Activated naive CD4-positive, alpha-beta T cell treated with anti-CD3 and anti-CD28 coated beads for 36 hours (primary cell): ENCODE measurements at regions of chr2 and their contacts with region 1.

Region 1: GRCh38 chr2:64914735-64915509 is 74.3 kb upstream of the SLC1A4 start:
- DNase-seq: no peak
- H3K4me3 Mint-ChIP-seq: no peak overlapping the region
- H3K27ac Mint-ChIP-seq: no peak overlapping the region
- H3K4me1 Mint-ChIP-seq: peaks cover 14% of the 10 kb centered on the region
- H3K27me3 Mint-ChIP-seq: no peaks in the 10 kb centered on the region

Region 2: DNA sequence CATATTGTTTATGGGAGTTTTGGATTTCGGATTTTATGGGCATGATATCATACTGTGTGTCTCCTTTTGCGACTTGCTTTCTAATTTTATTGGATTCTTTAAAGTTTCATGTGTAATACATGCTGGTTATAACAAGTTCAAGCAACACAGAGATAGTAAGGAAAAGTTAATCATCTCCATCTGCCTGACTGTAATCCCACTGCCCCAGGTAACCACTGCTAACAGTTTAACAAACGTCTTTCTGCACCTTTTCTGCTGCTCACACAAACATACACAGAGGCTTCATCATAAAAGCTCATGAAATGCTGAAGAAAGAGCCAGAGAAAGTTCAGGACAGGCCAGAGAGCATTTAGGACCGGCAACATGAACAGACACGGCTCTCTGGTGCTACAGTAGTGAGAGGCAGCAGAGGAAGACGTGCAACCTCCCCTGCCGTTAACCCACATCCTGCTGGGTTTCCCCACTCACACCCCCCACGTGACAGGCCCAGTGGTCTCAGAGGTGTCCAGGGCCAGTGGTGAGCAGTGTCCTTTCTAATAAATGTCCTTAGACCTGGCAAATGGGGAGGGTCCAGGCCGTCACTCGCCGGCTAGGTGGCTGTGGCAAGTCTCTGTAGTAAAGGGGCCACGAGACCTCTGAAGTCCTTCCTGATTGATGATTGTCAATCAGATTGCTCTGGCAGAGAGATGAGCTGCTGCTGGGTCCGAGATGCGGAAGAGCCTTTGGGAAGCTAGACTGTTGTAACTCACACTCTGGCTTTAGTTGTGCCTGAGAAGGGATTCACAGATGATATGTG is 31.2 kb after region 1 on chr2:
- CTCF ChIA-PET with region 1: interaction called, 11 read pairs
- intact Hi-C with region 1: loop called (anchors 2 kb)
- DNase-seq: peak; percentile 84
- H3K4me3 Mint-ChIP-seq: peak overlapping the region; percentile 64
- H3K27ac Mint-ChIP-seq: peak overlapping the region; percentile 81
- H3K4me1 Mint-ChIP-seq: peaks cover 26% of the 10 kb centered on the region
- H3K27me3 Mint-ChIP-seq: no peaks in the 10 kb centered on the region

Region 3: GRCh38 chr2:65031341-65032018 is 116.6 kb after region 1 on chr2:
- CTCF ChIA-PET with region 1: interaction called, 77 read pairs
- intact Hi-C with region 1: loop called (anchors 1 kb)
- DNase-seq: peak; percentile 18
- H3K4me3 Mint-ChIP-seq: no peak overlapping the region
- H3K27ac Mint-ChIP-seq: no peak overlapping the region
- H3K4me1 Mint-ChIP-seq: peaks cover 23% of the 10 kb centered on the region
- H3K27me3 Mint-ChIP-seq: no peaks in the 10 kb centered on the region

Region 4: GRCh38 chr2:65142515-65142914 is 227.6 kb after region 1 on chr2:
- CTCF ChIA-PET with region 1: no interaction called
- intact Hi-C with region 1: loop called (anchors 1 kb)
- DNase-seq: peak; percentile 27
- H3K4me3 Mint-ChIP-seq: no peak overlapping the region
- H3K27ac Mint-ChIP-seq: no peak overlapping the region
- H3K4me1 Mint-ChIP-seq: no peaks in the 10 kb centered on the region
- H3K27me3 Mint-ChIP-seq: no peaks in the 10 kb centered on the region

Region 5: GRCh38 chr2:65186872-65187851 is 272.2 kb after region 1 on chr2:
- CTCF ChIA-PET with region 1: interaction called, 4 read pairs
- intact Hi-C with region 1: loop called (anchors 2 kb)
- DNase-seq: peak; percentile 81
- H3K4me3 Mint-ChIP-seq: no peak overlapping the region
- H3K27ac Mint-ChIP-seq: no peak overlapping the region
- H3K4me1 Mint-ChIP-seq: peaks cover 4% of the 10 kb centered on the region
- H3K27me3 Mint-ChIP-seq: peaks cover 5% of the 10 kb centered on the region